ENCODE measurements at regions of chr2 and their contacts with region 1.

Region 1: GRCh38 chr2:195343942-195344530 is 313.0 kb upstream of the SLC39A10 start:
- H3K4me3 ChIP-seq: no peak overlapping the region
- H3K27ac ChIP-seq: no peak overlapping the region
- H3K4me1 ChIP-seq: no peaks in the 10 kb centered on the region
- CTCF ChIP-seq: no peak

Region 2: GRCh38 chr2:195364015-195364965 is 20.3 kb after region 1 on chr2:
- CTCF ChIA-PET with region 1: no interaction called
- POLR2A ChIA-PET with region 1: interaction called, 10 read pairs
- H3K4me3 ChIP-seq: no peak overlapping the region
- H3K27ac ChIP-seq: no peak overlapping the region
- H3K4me1 ChIP-seq: no peaks in the 10 kb centered on the region
- CTCF ChIP-seq: no peak

Region 3: DNA sequence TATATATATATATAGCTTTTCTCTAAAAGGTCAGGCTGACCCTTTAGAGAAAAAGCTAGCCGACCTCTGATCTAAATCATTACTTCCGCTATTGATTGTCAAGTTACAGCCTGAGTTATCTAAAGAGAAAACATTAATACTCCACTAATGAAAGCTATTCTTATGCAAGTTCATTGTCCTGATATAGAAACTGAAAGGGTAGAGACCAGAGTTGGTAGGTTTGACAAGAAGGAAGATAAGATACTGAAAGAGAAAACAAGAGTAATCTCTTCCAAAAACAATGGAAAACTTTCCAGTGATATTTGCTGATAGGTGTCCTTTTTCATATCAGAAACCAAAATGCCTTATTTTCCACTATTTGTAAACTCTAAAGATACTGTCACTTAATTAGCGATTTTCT is 250.2 kb after region 1 on chr2:
- CTCF ChIA-PET with region 1: no interaction called
- POLR2A ChIA-PET with region 1: no interaction called
- H3K4me3 ChIP-seq: no peak overlapping the region
- H3K27ac ChIP-seq: no peak overlapping the region
- H3K4me1 ChIP-seq: no peaks in the 10 kb centered on the region
- CTCF ChIP-seq: no peak